Ascending aorta (tissue), 2 donors: ENCODE measurements at regions of chr1 and their contacts with region 1.

Region 1: DNA sequence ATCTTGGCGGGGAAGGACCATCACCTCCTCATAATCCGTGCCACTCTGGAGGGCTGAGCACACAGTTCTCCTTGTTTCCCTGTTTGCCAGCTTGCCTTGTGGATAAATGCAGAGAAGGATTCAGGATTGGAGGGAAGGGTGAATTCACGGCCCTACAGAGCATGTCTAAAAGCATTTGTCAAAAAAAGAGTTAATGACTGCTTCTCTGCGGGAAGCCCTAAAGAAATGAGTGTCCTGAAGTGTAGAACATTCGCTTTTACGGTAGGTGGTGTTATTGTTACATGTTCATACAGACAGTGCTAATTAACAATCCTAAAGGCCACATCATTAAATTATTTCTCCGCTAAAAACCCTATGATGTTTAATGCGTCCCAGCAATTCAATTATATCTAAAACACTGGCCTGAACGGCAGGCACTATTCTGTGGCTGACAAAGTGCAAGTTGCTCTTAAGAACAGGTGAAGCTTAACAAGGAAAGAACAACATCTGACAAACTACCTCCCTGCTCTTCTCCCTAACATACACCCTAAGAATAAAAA is 112.3 kb upstream of the NFIA start:
- DNase-seq: no peak
- H3K4me3 ChIP-seq: no peak overlapping the region
- H3K27ac ChIP-seq: peak overlapping the region; percentile 39 to 46
- H3K4me1 ChIP-seq: peaks cover 0 to 24% of the 10 kb centered on the region in 2 donors
- H3K27me3 ChIP-seq: no peaks in the 10 kb centered on the region
- CTCF ChIP-seq: peak in 2 of 3 experiments; percentile 40 to 61

Region 2: DNA sequence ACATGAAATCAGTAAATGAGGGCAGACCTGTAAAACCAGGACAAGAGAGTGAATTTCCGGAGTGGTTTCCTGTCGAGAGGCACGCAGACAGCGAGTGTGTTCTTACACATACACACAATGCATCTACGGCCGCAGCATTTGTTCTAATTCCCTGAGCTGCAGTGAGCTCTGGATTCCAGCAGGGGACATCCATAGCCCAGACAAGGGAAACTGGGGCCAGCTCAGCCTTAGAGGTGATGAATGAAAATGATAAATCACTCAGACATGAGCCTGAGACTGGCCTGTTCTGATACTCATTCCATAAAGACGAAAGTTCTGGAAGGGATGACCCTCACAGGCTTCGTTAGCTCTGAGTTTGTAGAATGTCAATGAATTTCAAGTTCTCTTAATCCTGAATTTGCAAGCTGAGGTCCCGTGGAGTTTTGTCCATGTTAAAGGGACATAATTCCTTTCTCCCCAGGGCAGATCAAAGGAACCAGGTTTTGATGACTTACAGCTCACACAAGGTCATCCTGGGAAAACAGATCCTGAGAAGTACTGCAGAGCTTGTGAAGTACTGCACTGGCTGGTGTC is 688.6 kb before region 1 on chr1:
- intact Hi-C with region 1: loop called (anchors 5 kb)
- DNase-seq: peak in 1 of 2 donors; percentile 79
- H3K4me3 ChIP-seq: no peak overlapping the region
- H3K27ac ChIP-seq: no peak overlapping the region
- H3K4me1 ChIP-seq: peaks cover 0 to 10% of the 10 kb centered on the region in 2 donors
- H3K27me3 ChIP-seq: no peaks in the 10 kb centered on the region
- CTCF ChIP-seq: peak; percentile 80 to 97 (median 96)

Region 3: GRCh38 chr1:61011561-61012263 is 41.7 kb after region 1 on chr1:
- intact Hi-C with region 1: loop called (anchors 5 kb)
- DNase-seq: no peak
- H3K4me3 ChIP-seq: no peak overlapping the region
- H3K27ac ChIP-seq: no peak overlapping the region
- H3K4me1 ChIP-seq: peaks cover 0 to 14% of the 10 kb centered on the region in 2 donors
- H3K27me3 ChIP-seq: no peaks in the 10 kb centered on the region
- CTCF ChIP-seq: no peak

Region 4: DNA sequence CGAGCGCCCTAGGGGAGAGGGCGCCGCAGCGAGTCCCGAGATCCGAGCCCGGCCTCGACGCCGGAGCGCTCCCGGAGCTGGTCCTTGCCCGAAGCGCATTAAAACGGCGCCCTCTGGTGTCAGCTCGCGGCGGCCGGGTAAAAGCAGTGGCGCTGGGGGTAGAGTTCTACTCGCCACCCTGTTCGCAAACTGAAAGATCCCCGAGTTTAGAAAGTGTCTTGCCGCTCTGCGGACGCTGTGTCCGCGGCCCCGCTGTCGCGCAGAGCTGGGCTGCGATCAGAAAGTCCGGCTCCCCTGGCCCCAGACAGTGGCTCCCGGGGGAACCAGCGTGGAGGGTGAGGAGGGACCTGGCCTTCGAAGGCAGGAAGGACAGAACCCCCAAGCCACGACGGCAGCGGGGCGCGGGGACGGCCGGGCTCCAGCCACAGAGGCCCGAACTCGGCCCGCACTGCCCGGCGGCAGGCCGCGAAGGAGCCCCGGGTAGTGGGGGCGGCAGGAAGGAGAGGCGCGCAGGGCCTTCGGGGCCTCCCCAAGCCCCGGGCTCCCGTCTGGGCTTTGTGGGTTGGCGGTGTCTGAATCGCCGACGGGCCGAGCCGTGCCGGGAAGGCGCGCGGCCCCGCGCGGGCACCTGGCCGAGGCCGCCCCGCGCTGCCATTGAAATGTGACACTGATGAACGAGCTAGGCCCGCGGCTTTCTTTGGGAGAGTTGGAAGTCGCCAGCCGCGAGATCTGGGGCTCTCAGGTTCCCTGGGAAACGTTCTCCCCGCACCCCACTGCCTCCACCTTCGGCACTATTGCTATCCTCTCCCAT is 73.2 kb after region 1 on chr1:
- intact Hi-C with region 1: loop called (anchors 1 kb)
- DNase-seq: peak; percentile 38 to 94
- H3K4me3 ChIP-seq: peak overlapping the region; percentile 58 to 83
- H3K27ac ChIP-seq: peak overlapping the region; percentile 93 to 98
- H3K4me1 ChIP-seq: no peaks in the 10 kb centered on the region
- H3K27me3 ChIP-seq: no peaks in the 10 kb centered on the region
- CTCF ChIP-seq: peak; percentile 92 to 95 (median 92)

Region 5: DNA sequence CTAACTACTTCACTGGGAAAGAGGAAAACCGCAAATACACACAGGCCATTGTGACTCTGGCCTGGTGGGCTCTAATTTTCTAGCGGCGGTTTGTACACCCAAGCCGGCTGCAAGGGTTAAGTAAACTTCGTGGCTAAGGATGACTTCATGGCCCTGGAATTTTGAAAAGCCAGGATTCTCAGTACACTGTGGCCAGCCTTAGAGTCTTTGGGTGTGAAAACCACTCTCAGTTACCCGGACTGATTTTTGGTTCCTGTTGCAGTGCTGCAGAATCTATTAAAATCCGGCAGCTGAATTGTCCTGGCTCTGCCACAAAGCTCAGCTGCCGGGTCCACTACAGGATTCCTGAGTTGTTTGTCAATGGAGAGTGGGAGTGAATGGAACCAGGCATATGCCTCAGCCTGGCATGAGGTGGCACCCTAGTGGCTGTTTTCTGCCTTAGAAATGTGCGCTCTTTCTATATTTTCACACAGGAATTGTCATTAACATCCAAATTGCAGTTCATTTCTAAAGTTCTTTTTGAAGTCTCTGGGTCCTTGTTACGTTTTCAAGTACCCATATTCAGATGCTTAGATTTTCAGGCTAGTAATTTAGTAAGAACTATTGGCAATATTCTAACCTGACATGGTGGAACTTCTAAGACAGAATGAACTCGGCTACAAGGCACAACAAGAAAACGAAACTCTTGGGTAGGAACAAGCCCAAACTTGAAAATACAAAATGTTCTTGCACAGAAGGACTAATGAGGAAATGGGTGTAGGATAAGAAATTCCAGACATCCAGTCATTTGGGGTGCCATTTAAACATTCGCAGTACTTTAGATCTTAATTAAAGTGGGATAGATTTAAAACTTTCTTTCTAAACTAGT is 368.2 kb after region 1 on chr1:
- intact Hi-C with region 1: loop called (anchors 5 kb)
- DNase-seq: peak; percentile 38 to 92
- H3K4me3 ChIP-seq: peak overlapping the region; percentile 27 to 54
- H3K27ac ChIP-seq: peak overlapping the region; percentile 86 to 88
- H3K4me1 ChIP-seq: peaks cover 3 to 45% of the 10 kb centered on the region in 2 donors
- H3K27me3 ChIP-seq: no peaks in the 10 kb centered on the region
- CTCF ChIP-seq: peak; percentile 71 to 80 (median 75)